AG04449 (cell line): ENCODE measurements at regions of chr9 and their contacts with region 1.

Region 1: GRCh38 chr9:15837079-15837679 is 284.3 kb downstream of the CCDC171 start:
- DNase-seq: peak; percentile 4
- H3K4me3 ChIP-seq: no peak overlapping the region
- CTCF ChIP-seq: peak; percentile 52

Region 2: DNA sequence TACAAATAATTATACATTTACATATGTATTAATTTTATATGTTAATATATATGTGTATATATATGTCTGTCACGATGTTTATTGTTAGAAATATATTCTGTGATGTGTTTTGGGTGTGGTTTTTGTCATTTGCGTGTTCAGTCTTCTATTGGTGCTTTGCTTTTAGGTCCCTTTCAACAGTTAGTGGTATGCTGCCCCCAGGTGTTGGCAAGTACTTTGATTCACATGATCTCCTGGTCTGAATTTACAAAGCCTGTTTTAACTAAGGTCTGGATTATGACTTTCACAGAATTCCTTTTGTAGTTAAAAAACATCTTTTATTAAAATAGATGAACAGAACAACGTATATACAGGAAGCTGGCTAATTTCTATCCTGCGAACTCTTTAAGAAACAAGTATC is 12.9 kb before region 1 on chr9:
- CTCF ChIA-PET with region 1: interaction called, 20 read pairs
- POLR2A ChIA-PET with region 1: no interaction called
- DNase-seq: no peak
- H3K4me3 ChIP-seq: no peak overlapping the region
- CTCF ChIP-seq: no peak

Region 3: DNA sequence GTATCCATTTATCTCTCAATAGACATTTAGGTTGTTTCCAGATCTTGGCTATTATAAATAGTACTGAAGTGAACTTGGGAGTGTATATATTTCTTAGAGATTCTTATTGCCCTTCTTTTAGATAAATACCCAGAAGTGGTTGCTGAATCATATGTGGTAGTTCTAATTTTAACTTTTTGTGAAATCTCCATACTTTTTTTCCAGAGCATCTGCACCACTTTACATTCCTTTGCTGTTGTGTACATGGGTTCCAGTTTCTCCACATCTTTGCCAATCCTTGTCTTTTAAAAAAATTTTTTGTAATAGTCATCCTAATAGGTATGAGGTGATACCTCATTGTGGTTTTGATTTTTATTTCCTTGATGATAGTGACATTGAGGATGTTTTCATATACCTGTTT is 19.4 kb after region 1 on chr9:
- CTCF ChIA-PET with region 1: interaction called, 10 read pairs
- POLR2A ChIA-PET with region 1: no interaction called
- DNase-seq: peak; percentile 63
- H3K4me3 ChIP-seq: no peak overlapping the region
- CTCF ChIP-seq: no peak